Body of pancreas (tissue), 4 donors: ENCODE measurements at regions of chr12 and their contacts with region 1.

Region 1: DNA sequence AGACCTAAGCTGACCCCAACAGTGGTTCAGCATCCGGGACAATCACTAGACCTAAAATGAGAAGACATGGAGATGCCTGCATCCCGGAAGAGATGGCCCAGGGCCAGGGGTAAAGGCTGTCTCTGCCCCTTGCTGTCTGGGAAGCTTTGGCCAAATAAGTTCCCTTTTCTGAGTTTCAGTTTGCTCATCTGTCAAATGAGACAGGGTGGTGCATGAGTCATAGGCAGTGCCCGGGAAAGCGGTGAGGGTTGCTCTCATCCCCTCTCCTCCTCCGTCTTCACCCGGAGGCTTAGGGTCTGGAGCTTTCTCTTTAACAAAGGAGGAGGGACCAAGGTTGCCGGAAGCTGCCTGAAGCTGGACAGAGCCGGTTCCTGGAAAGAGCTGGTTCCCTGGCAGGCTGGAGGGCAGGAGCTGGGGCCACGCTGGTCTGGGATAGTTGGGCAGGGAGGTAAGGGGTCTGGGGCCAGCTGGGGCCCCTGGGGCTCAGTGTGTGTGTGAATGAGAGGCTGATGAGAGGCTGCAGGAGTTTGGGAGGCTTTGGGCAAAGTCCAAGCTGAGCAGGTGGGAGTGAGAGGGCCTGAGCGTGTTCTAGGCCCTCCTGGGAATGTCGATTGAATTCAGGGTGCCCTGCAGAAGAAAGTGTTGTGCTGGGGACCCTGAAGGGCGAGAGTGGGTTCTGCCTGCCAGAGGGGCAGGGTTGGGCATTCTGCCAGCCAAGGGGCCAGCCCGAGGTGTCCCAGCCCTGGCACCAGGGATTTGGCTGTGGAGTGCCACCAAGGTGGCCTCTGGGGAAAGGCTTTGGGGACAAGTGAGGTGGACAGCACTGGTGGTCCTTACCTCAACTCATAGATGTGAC is at the start of gene SDSL:
- DNase-seq: peak; percentile 71 to 85 (median 78)
- ATAC-seq: peak; percentile 88
- H3K4me3 ChIP-seq: peak within 1 kb of the TSS; percentile 30 to 31
- H3K27ac ChIP-seq: peak within 1 kb of the TSS in 3 of 4 donors; percentile 50 to 78 (median 70)
- H3K4me1 ChIP-seq: peaks cover 32% of the 10 kb centered on the region
- H3K27me3 ChIP-seq: no peaks in the 10 kb centered on the region
- CTCF ChIP-seq: no peak
- POLR2A ChIP-seq: peak in 2 of 3 donors; percentile 70 to 71
- total RNA-seq, gene SDSL: 7.5 to 15.2 TPM

Region 2: DNA sequence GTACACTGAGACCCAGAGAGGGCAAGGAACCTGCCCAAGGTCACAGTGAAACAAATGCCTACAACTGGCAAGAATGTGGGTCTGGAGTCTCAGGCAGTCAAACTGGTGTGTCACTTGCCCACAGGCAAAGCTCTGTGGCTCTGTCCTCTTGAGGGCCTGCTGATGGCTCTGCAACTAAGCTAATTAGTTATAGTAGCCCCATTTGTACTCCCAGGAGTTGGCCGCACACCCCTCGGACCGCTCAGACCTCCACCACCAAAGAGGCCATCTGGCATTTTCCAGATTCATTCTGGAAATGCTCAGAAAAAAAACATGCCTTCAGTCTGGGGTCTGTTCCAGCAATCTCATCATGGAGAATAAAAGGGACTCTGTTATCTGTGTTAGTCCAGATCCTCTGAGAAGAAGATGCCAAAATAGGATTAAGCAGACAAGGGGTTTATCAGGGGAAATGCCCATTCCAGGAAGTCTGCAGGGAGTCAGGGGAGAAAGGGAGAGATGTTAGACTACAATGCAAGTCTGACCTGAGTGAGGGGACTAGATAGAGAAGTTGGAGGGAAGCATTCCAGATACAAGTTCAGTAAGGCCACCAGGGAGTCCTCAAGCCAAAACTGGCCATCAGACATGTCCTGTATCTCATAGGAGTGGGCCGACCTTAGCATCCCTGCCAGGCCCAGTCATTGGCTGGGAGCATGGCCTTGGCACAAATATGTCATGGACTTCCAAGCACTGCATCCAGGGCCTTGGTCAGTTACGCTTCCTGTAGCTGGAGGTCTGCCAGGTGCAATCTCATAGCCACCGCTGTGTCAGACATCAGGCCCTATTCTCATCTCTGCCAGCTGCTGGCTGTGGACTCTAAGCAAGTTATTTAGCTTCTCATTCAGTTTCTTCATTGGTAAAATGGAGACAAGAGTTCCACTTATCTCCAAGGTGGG is 530.9 kb before region 1 on chr12:
- intact Hi-C with region 1: no loop called
- DNase-seq: peak in 3 of 4 donors; percentile 7 to 22 (median 15)
- ATAC-seq: no peak
- H3K4me3 ChIP-seq: no peak overlapping the region
- H3K27ac ChIP-seq: no peak overlapping the region
- H3K4me1 ChIP-seq: no peaks in the 10 kb centered on the region
- H3K27me3 ChIP-seq: no peaks in the 10 kb centered on the region
- CTCF ChIP-seq: no peak
- POLR2A ChIP-seq: no peak

Region 3: DNA sequence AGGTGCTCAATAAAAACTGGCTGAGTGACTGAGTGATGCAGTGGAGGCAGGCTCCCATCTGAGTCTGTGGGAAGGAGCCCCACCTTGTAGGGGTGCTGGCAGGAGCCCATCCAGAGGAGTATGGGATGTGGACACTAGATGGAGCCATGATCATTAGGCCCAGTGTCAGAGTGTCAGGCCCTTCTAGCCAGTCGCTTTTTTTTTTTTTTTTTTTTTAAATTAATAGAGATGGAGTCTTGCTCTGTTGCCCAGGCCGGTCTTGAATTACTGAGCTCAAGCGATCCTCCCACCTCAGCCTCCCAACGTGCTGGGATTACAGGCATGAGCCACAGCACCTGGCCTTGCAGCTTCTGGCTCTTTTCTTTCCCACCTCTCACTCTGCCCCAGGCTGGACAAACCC is 225.3 kb before region 1 on chr12:
- intact Hi-C with region 1: loop called (anchors 10 kb)
- DNase-seq: peak; percentile 78 to 85 (median 82)
- ATAC-seq: peak; percentile 70
- H3K4me3 ChIP-seq: no peak overlapping the region
- H3K27ac ChIP-seq: no peak overlapping the region
- H3K4me1 ChIP-seq: peaks cover 38% of the 10 kb centered on the region
- H3K27me3 ChIP-seq: no peaks in the 10 kb centered on the region
- CTCF ChIP-seq: peak; percentile 15 to 83 (median 67)
- POLR2A ChIP-seq: no peak

Region 4: DNA sequence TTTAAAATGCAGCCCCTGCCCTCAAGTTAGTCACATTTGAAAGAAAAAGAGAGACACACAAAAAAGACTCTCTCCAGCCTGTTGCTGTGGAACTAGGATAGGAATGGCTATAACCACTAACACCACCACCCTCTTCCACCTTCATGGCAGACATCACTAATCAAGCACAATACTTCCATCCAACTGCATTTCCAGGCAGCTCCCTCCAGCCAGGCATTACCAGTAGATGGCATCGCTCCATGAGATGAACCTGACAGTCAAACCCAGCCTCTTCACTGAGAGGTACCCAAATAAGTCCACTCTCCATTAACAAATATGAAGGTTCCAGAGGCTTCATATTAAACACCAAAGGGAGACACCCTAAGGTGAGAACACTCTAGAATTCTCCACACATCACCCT is 111.8 kb before region 1 on chr12:
- intact Hi-C with region 1: loop called (anchors 10 kb)
- DNase-seq: no peak
- ATAC-seq: no peak
- H3K4me3 ChIP-seq: no peak overlapping the region
- H3K27ac ChIP-seq: no peak overlapping the region
- H3K4me1 ChIP-seq: no peaks in the 10 kb centered on the region
- H3K27me3 ChIP-seq: no peaks in the 10 kb centered on the region
- CTCF ChIP-seq: no peak
- POLR2A ChIP-seq: no peak